ENCODE measurements at regions of chr5 and their contacts with region 1.

Region 1: GRCh38 chr5:138527170-138527569 is 15.9 kb downstream of the ETF1 start:
- DNase-seq: no peak
- CTCF ChIP-seq: no peak

Region 2: DNA sequence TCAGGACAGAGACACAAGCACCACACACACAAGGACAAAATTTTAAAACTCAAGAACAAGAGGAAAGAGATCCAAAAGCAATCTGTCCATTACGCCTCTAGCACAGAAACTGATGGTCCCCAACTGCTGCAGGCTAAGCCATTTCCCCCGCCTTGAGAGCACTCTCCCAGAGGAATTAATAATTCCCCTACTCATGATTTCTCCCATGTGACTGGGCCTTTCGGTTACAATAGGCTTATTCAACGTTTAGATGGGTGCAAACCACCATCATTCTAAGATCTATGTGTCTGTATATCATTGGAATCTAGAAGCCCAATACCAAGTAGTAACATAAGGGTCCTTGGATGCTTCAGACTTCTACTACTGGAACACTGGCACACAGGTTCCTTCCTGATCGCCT is 367.5 kb before region 1 on chr5:
- CTCF ChIA-PET with region 1: no interaction called
- POLR2A ChIA-PET with region 1: no interaction called
- DNase-seq: no peak
- CTCF ChIP-seq: no peak

Region 3: GRCh38 chr5:138515556-138516245 is 11.5 kb before region 1 on chr5:
- CTCF ChIA-PET with region 1: interaction called, 11 read pairs
- POLR2A ChIA-PET with region 1: no interaction called
- DNase-seq: no peak
- CTCF ChIP-seq: no peak

Region 4: GRCh38 chr5:138601444-138601843 is 74.3 kb after region 1 on chr5:
- CTCF ChIA-PET with region 1: no interaction called
- POLR2A ChIA-PET with region 1: no interaction called
- DNase-seq: no peak
- CTCF ChIP-seq: no peak